ENCODE measurements at regions of chr16 and their contacts with region 1.

Region 1: DNA sequence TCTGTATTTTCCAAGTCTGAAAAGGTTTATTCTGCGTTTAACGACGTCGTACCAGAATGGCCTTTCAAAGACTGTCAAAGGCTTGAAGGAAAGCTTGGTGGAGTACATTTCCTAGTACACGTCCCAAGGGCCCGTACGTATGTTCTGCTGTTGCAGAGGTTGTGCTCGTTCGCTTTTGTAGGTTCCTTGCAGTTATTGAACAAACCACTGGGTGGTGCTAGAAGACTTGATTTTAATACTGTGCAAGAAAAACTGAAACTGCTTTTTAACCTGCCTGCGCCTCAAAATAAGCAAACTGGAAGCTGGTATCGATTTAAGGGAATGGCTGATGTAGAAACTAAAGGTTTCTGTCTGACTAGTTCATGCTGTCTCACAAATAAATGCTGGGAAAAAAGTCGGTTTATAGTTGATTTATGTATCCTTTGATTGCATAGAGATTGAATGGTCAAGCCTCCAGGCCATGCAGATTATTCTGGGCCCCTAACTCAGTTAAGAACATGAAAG is 54.6 kb downstream of the USP10 start:
- DNase-seq: peak in 1 of 2 donors; percentile 71
- H3K4me3 ChIP-seq: no peak overlapping the region
- H3K27ac ChIP-seq: no peak overlapping the region
- H3K4me1 ChIP-seq: peaks cover 0 to 17% (median 6%) of the 10 kb centered on the region in 4 donors
- H3K27me3 ChIP-seq: no peaks in the 10 kb centered on the region
- CTCF ChIP-seq: peak; percentile 74 to 93

Region 2: DNA sequence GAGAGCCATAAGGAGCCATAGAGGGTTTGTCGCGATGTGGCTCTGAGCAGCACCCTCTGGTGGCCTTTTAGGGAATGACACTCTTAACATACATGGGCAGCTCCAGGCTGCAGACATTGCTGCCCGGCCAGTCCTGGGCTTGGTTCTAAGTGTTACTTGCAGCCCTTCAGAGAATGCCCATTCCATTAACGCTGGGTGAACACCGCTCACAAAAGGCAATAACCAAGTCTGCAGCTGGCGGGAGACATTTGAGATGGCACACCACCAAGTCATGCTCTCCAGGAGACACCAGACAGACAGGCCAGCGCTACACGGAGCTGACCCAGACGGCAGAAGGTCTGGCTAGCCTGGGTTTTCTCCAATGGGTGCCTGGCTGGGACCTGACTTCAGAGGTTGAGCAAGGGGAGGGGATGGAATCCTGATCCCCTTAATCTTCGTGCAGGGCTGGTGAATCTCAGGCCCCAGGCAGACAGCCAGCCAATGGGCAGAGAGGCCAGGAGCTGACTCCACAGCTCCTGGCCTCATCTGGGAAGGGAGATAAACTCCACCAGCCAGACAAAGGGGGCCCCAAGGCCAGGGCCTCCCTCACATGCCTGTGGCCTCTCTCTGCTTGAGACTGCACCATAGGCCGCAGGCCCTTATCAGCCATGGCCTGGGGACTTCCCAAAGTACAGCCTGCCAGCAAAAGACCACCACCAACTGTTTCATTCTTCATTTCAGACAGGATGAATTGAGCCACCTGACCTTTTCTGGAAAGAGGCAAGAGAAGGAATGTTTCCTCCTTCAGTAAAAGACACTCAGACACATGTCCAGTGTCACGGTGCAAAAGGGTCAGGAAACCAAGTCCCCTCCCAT is 198.2 kb after region 1 on chr16:
- intact Hi-C with region 1: loop called (anchors 1 kb)
- DNase-seq: peak; percentile 85 to 87
- H3K4me3 ChIP-seq: no peak overlapping the region
- H3K27ac ChIP-seq: no peak overlapping the region
- H3K4me1 ChIP-seq: peaks cover 0 to 8% (median 2%) of the 10 kb centered on the region in 4 donors
- H3K27me3 ChIP-seq: peaks cover 0 to 2% of the 10 kb centered on the region in 2 donors
- CTCF ChIP-seq: peak; percentile 88 to 95

Region 3: GRCh38 chr16:84967828-84968227 is 213.4 kb after region 1 on chr16:
- intact Hi-C with region 1: loop called (anchors 5 kb)
- DNase-seq: no peak
- H3K4me3 ChIP-seq: no peak overlapping the region
- H3K27ac ChIP-seq: no peak overlapping the region
- H3K4me1 ChIP-seq: peaks cover 0 to 12% (median 6%) of the 10 kb centered on the region in 4 donors
- H3K27me3 ChIP-seq: peaks cover 0 to 4% of the 10 kb centered on the region in 2 donors
- CTCF ChIP-seq: no peak

Measured in tibial artery (tissue), 4 donors.